ENCODE measurements at regions of chr22 and their contacts with region 1.

Region 1: GRCh38 chr22:22463855-22464540 is 44.5 kb downstream of the ZNF280B start:
- DNase-seq: no peak
- ATAC-seq: no peak

Region 2: DNA sequence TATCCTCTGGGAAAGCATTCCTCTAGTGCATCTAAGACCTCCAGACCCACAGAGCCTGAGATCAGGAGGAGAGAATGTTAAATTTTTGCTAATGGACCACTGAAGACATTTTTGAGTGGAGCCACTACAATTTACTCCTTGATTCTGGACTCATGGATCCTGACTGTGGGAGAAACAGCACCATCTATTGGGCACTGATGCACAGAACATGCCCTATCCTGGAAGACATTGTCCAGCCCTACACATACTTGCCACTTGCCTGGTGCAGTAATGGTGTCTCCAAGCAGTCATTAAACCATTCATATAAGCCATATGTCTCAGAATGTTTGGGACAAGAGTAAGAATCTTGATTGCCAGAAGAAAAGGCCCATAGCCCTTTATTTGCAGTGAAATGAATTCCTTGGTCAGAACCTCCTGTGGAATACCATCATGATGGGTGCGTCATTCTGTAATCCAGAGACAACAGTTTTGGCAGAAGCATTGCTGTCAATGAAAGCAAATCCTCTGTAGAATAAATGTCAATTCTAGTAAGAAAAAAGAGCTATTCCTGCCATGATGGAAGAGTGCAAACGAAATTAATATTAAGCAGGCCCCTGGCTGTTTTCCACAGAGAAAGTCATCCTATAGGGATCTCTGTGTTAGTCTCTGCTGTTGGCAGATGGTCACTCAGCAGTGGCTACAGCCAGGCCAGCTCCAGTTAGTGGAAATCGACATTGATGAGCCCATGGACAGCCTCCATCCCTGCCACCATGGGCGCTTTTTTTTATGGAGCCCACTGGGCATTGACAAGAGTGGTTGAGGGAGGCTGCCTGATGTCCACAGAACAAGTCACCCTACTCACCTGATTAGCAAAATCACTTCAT is 223.9 kb after region 1 on chr22:
- intact Hi-C with region 1: loop called (anchors 5 kb)
- DNase-seq: no peak
- ATAC-seq: peak; percentile 74

Region 3: GRCh38 chr22:22943521-22944267 is 479.7 kb after region 1 on chr22:
- intact Hi-C with region 1: no loop called
- DNase-seq: no peak
- ATAC-seq: no peak

Region 4: GRCh38 chr22:23128269-23129108 is 664.5 kb after region 1 on chr22:
- intact Hi-C with region 1: loop called (anchors 5 kb)
- DNase-seq: no peak
- ATAC-seq: peak; percentile 81

Measured in Right ventricle myocardium inferior (tissue), 1 donor.